ENCODE measurements at regions of chr15 and their contacts with region 1.

Region 1: GRCh38 chr15:25171856-25172687 is 217.3 kb downstream of the SNRPN start:
- DNase-seq: peak; percentile 32
- ATAC-seq: peak; percentile 22

Region 2: GRCh38 chr15:23503576-23503975 is 1668.5 kb before region 1 on chr15:
- intact Hi-C with region 1: no loop called
- DNase-seq: no peak
- ATAC-seq: no peak

Region 3: GRCh38 chr15:24819680-24820079 is 352.4 kb before region 1 on chr15:
- intact Hi-C with region 1: loop called (anchors 5 kb)
- DNase-seq: no peak
- ATAC-seq: no peak

Region 4: DNA sequence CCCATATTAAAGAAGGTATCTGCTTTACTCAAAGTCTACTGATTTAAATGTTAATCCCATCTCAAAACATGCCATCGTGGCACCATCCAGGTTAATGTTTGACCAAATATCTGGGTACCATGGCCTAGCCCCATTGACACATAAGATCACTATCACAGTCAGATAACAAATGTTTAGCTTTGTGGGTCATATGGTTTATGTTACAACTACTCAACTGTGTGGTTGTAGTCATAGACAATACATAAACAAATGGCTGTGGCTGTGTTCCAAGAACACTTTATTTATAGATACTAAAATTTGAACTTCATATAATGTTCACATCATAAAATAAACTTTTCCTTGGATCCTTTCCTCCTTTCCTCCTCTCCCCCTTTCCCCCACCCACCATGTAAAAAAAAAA is 227.1 kb before region 1 on chr15:
- intact Hi-C with region 1: no loop called
- DNase-seq: no peak
- ATAC-seq: no peak

Region 5: DNA sequence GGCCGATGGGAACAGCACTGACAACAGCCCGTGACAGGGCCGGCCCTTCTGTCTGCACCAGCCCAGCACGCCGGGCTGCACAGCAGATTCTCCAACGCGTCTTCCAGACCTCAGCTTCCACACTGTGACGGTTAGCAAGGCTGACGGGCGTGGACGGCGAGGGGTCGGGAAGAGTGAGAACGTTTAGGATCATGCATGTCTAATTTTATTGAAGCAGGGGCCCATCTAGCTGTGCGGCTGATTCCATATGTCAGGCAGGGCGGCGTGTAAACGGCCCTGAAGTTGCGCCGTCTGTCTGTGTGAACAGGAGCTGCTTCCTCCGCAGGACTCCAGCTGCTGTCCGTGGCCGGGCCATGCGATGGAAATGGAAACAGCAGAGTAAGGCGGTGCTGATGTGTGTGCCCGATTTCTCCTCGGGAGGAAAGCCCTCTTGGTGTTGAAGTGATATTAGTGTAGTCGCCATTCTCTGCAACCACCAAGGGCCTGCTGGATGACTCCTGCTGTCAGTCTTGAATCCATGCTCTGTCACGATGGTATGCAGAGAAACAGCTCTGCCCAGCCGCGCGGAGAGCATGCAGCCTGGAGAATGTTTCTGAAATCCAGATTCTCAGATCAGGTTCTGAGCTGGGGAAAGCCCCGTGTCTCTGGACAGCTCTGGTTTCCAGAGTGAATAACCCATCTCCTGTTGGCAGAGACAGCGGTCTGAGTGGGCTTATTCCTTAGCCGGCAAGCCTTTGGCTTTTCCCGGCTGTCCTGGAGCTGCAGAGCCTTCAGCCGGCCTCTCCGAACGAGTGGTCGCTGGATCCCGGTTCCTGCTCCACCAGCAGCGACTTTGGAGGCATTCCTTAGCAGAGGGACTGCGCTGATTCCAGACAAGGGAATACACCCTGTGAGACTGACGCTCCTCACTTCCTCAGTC is 424.8 kb after region 1 on chr15:
- intact Hi-C with region 1: no loop called
- DNase-seq: no peak
- ATAC-seq: peak; percentile 34